Ovary (tissue), 10 donors: ENCODE measurements at regions of chr1 and their contacts with region 1.

Region 1: DNA sequence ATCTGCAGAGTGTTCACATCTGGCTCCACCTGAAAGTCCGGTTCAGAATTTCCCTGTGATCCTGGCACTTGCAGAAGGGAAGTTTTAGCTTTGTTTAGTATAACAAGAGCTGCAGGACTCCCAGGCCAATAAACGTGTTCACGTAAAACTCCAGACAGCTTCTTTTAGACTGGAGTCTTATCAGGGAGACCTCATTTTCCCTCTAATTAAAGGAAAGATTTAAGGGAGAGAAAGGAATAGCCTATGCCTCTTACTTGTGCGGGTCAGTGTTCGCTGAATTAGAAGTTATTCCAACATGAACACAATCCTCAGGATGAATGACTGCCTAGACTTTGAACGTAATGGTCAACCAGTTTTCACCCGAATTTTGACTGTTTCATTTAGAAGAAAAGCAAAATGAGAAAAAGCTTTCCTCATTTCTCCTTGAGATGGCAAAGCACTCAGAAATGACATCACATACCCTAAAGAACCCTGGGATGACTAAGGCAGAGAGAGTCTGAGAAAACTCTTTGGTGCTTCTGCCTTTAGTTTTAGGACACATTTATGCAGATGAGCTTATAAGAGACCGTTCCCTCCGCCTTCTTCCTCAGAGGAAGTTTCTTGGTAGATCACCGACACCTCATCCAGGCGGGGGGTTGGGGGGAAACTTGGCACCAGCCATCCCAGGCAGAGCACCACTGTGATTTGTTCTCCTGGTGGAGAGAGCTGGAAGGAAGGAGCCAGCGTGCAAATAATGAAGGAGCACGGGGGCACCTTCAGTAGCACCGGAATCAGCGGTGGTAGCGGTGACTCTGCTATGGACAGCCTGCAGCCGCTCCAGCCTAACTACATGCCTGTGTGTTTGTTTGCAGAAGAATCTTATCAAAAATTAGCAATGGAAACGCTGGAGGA is 202.1 kb upstream of the SGIP1 start:
- DNase-seq: peak; percentile 25 to 61 (median 53)
- H3K4me3 ChIP-seq: peak overlapping the region; percentile 38
- H3K27ac ChIP-seq: peak overlapping the region; percentile 4 to 44
- H3K4me1 ChIP-seq: peaks cover 2% of the 10 kb centered on the region
- H3K27me3 ChIP-seq: no peaks in the 10 kb centered on the region
- CTCF ChIP-seq: no peak
- EP300 ChIP-seq: no peak
- POLR2A ChIP-seq: no peak

Region 2: DNA sequence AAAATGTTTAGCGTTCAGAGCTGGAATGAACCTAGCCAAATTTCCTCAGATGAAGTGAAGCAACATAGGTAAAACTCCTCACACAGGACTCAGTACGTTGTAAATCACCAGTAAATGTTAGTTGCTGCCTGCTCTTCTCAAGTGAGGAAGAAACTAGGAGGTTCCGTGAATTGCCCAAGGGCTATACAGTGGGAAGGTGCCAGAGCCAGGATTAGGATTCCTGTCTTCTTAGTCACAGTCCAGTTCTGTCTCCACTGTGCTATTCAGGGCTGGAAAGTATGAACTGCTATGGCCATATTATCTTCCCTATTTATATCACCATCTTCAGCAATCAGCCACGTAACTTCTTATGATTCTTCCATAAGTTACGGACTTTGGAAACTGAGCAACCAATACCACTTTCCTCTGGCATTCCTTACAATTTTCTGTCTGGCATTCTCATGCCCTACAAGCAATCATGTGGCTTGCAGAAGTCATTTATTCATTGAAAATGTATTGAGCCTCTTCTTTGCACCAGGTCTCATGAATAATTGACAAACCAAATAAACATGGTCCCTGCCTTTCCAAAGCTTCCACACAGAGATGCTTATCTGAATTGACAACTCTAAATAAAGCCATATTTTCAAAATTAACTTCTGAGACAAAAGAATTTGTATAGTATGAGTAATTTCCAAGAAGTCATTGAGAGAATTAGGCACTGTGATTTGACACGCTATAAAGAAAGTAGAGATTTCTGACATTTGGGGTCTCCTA is 69.5 kb before region 1 on chr1:
- intact Hi-C with region 1: loop called in 1 of 4 experiments (anchors 10 kb)
- DNase-seq: no peak
- H3K4me3 ChIP-seq: no peak overlapping the region
- H3K27ac ChIP-seq: no peak overlapping the region
- H3K4me1 ChIP-seq: no peaks in the 10 kb centered on the region
- H3K27me3 ChIP-seq: no peaks in the 10 kb centered on the region
- CTCF ChIP-seq: no peak
- EP300 ChIP-seq: no peak
- POLR2A ChIP-seq: no peak